ENCODE measurements at regions of chr1 and their contacts with region 1.

Region 1: GRCh38 chr1:7953850-7954609 is 7.5 kb upstream of the PARK7 start:
- DNase-seq: peak; percentile 31 to 88 (median 66)
- ATAC-seq: peak; percentile 59
- H3K4me3 ChIP-seq: peak overlapping the region; percentile 88
- H3K4me3 Mint-ChIP-seq: peak overlapping the region; percentile 93
- H3K27ac ChIP-seq: peak overlapping the region; percentile 83 to 93
- H3K27ac Mint-ChIP-seq: peak overlapping the region; percentile 89
- H3K4me1 ChIP-seq: peaks cover 43% of the 10 kb centered on the region
- H3K4me1 Mint-ChIP-seq: peaks cover 46% of the 10 kb centered on the region
- H3K27me3 ChIP-seq: no peaks in the 10 kb centered on the region
- H3K27me3 Mint-ChIP-seq: no peaks in the 10 kb centered on the region
- CTCF ChIP-seq: no peak

Region 2: GRCh38 chr1:5992026-5992813 is 1961.8 kb before region 1 on chr1 and contains the start of gene NPHP4:
- CTCF ChIA-PET with region 1: no interaction called
- POLR2A ChIA-PET with region 1: no interaction called
- intact Hi-C with region 1: loop called in 1 of 2 experiments (anchors 5 kb)
- DNase-seq: peak; percentile 97 to 100 (median 99)
- ATAC-seq: peak; percentile 89
- H3K4me3 ChIP-seq: peak within 1 kb of the TSS; percentile 76
- H3K4me3 Mint-ChIP-seq: peak within 1 kb of the TSS; percentile 95
- H3K27ac ChIP-seq: peak within 1 kb of the TSS; percentile 73 to 92
- H3K27ac Mint-ChIP-seq: peak within 1 kb of the TSS; percentile 94
- H3K4me1 ChIP-seq: peaks cover 46% of the 10 kb centered on the region
- H3K4me1 Mint-ChIP-seq: peaks cover 34% of the 10 kb centered on the region
- H3K27me3 ChIP-seq: no peaks in the 10 kb centered on the region
- H3K27me3 Mint-ChIP-seq: no peaks in the 10 kb centered on the region
- CTCF ChIP-seq: no peak
- total RNA-seq, gene NPHP4: 6.2 to 7.7 TPM

Measured in CD4-positive, alpha-beta T cell (primary cell).